ENCODE measurements at regions of chr7 and their contacts with region 1.

Region 1: GRCh38 chr7:73738612-73739374 is at the start of gene ABHD11:
- DNase-seq: peak; percentile 96 to 100 (median 99)
- ATAC-seq: peak; percentile 87
- H3K4me3 ChIP-seq: peak within 1 kb of the TSS; percentile 86
- H3K4me3 Mint-ChIP-seq: peak within 1 kb of the TSS; percentile 94
- H3K27ac ChIP-seq: peak within 1 kb of the TSS; percentile 69 to 85
- H3K27ac Mint-ChIP-seq: peak within 1 kb of the TSS; percentile 92
- H3K4me1 ChIP-seq: peaks cover 29% of the 10 kb centered on the region
- H3K4me1 Mint-ChIP-seq: peaks cover 17% of the 10 kb centered on the region
- H3K27me3 ChIP-seq: no peaks in the 10 kb centered on the region
- H3K27me3 Mint-ChIP-seq: no peaks in the 10 kb centered on the region
- CTCF ChIP-seq: no peak
- total RNA-seq, gene ABHD11: 8.5 to 11.5 TPM

Region 2: GRCh38 chr7:73557108-73557396 is 181.7 kb before region 1 on chr7:
- CTCF ChIA-PET with region 1: no interaction called
- POLR2A ChIA-PET with region 1: interaction called, 8 read pairs
- intact Hi-C with region 1: loop called in 1 of 2 experiments (anchors 2 kb)
- DNase-seq: peak; percentile 77 to 97 (median 88)
- ATAC-seq: peak; percentile 92
- H3K4me3 ChIP-seq: peak overlapping the region; percentile 96
- H3K4me3 Mint-ChIP-seq: peak overlapping the region; percentile 96
- H3K27ac ChIP-seq: peak overlapping the region; percentile 97 to 98
- H3K27ac Mint-ChIP-seq: peak overlapping the region; percentile 96
- H3K4me1 ChIP-seq: peaks cover 35% of the 10 kb centered on the region
- H3K4me1 Mint-ChIP-seq: peaks cover 39% of the 10 kb centered on the region
- H3K27me3 ChIP-seq: no peaks in the 10 kb centered on the region
- H3K27me3 Mint-ChIP-seq: no peaks in the 10 kb centered on the region
- CTCF ChIP-seq: no peak

Region 3: GRCh38 chr7:73628504-73628903 is 110.3 kb before region 1 on chr7:
- CTCF ChIA-PET with region 1: interaction called, 14 read pairs
- POLR2A ChIA-PET with region 1: no interaction called
- intact Hi-C with region 1: no loop called
- DNase-seq: no peak
- ATAC-seq: no peak
- H3K4me3 ChIP-seq: no peak overlapping the region
- H3K4me3 Mint-ChIP-seq: no peak overlapping the region
- H3K27ac ChIP-seq: no peak overlapping the region
- H3K27ac Mint-ChIP-seq: no peak overlapping the region
- H3K4me1 ChIP-seq: peaks cover 8% of the 10 kb centered on the region
- H3K4me1 Mint-ChIP-seq: peaks cover 2% of the 10 kb centered on the region
- H3K27me3 ChIP-seq: peaks cover 36 to 38% of the 10 kb centered on the region in 2 experiments
- H3K27me3 Mint-ChIP-seq: peaks cover 72% of the 10 kb centered on the region
- CTCF ChIP-seq: no peak

Region 4: DNA sequence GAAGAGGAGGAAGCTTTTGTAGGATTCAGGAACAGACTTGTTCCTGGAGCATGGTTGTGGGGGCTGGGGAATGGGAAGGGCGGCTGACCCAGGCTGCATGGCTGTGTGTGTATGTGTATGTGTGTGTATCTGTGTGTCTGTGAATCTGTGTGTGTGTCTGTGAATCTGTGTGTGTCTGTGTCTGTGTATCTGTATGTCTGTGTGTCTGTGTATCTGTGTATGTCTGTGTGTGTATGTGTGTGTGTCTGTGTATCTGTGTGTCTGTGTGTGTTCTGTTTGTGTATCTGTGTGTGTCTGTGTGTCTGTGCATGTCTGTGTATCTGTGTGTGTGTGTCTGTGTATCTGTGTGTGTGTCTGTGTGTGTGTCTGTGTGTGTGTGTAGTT is 12.7 kb before region 1 on chr7:
- CTCF ChIA-PET with region 1: interaction called, 13 read pairs
- POLR2A ChIA-PET with region 1: interaction called, 4 read pairs
- intact Hi-C with region 1: no loop called
- DNase-seq: no peak
- ATAC-seq: peak; percentile 7
- H3K4me3 ChIP-seq: no peak overlapping the region
- H3K4me3 Mint-ChIP-seq: no peak overlapping the region
- H3K27ac ChIP-seq: no peak overlapping the region
- H3K27ac Mint-ChIP-seq: no peak overlapping the region
- H3K4me1 ChIP-seq: peaks cover 6% of the 10 kb centered on the region
- H3K4me1 Mint-ChIP-seq: no peaks in the 10 kb centered on the region
- H3K27me3 ChIP-seq: peaks cover 6 to 11% of the 10 kb centered on the region in 2 experiments
- H3K27me3 Mint-ChIP-seq: peaks cover 9% of the 10 kb centered on the region
- CTCF ChIP-seq: peak; percentile 26

Region 5: DNA sequence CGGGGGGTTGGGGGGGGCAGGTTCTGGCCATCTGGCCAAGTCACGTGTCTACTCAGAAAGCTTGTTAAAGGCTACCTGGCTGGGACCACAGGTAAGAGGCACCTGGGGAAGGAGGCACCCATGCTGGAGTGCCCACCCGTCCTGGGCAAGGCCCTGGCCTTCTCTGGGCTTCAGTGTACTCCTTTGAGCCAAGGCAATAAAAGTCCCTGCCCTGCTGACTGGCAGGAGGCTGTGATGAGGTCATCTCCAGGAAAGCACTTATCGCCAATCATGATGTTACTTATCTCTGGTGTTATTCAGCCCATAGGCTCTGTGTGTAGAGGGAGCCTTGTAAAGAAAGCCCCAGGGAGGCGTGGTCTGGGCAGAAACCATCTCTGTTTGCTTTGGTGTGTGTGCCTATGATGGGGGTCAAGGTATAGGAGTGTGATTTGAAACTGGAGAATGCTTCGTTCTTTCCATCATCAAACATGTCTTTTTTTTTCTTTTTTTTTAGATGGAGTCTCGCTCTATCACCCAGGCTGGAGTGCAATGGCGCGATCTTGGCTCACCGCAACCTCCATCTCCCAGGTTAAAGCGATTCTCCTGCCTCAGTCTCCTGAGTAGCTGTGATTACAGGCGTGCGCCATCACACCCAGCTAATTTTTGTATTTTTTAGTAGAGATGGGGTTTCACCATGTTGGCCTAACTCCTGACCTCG is 89.5 kb after region 1 on chr7:
- CTCF ChIA-PET with region 1: no interaction called
- POLR2A ChIA-PET with region 1: no interaction called
- intact Hi-C with region 1: no loop called
- DNase-seq: peak in 4 of 14 experiments; percentile 14 to 58 (median 34)
- ATAC-seq: peak; percentile 61
- H3K4me3 ChIP-seq: no peak overlapping the region
- H3K4me3 Mint-ChIP-seq: no peak overlapping the region
- H3K27ac ChIP-seq: no peak overlapping the region
- H3K27ac Mint-ChIP-seq: no peak overlapping the region
- H3K4me1 ChIP-seq: peaks cover 50% of the 10 kb centered on the region
- H3K4me1 Mint-ChIP-seq: peaks cover 43% of the 10 kb centered on the region
- H3K27me3 ChIP-seq: peaks cover 0 to 5% of the 10 kb centered on the region in 2 experiments
- H3K27me3 Mint-ChIP-seq: peaks cover 10% of the 10 kb centered on the region
- CTCF ChIP-seq: no peak

Region 6: DNA sequence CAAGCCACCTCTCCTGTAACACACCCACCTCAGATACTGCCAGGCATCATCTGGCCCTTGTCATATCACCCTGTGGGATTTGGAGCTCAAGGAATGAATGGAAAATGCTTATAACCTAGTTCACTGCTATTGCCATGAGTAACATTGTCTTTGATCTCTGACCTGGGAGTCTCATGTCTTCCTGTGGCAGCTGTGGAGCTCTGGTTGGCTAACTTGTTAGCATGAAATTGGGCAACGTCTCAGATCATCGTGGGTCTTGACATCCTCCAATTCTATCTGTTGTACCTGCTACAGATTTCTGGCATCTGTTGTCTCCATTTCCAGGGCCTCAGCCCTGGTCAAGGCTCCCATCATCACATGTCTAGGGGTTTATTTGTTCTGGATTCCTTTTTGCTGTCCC is 120.0 kb after region 1 on chr7:
- CTCF ChIA-PET with region 1: interaction called, 5 read pairs
- POLR2A ChIA-PET with region 1: no interaction called
- intact Hi-C with region 1: loop called (anchors 5 kb)
- DNase-seq: no peak
- ATAC-seq: no peak
- H3K4me3 ChIP-seq: no peak overlapping the region
- H3K4me3 Mint-ChIP-seq: no peak overlapping the region
- H3K27ac ChIP-seq: no peak overlapping the region
- H3K27ac Mint-ChIP-seq: no peak overlapping the region
- H3K4me1 ChIP-seq: peaks cover 8% of the 10 kb centered on the region
- H3K4me1 Mint-ChIP-seq: no peaks in the 10 kb centered on the region
- H3K27me3 ChIP-seq: peaks cover 0 to 2% of the 10 kb centered on the region in 2 experiments
- H3K27me3 Mint-ChIP-seq: peaks cover 20% of the 10 kb centered on the region
- CTCF ChIP-seq: no peak

Measured in CD4-positive, alpha-beta T cell (primary cell).